ENCODE measurements at regions of chr14 and their contacts with region 1.

Region 1: GRCh38 chr14:61103481-61104339 is 122.7 kb downstream of the SLC38A6 start:
- DNase-seq: peak; percentile 76
- H3K4me3 Mint-ChIP-seq: peak overlapping the region; percentile 24
- H3K27ac Mint-ChIP-seq: peak overlapping the region; percentile 90
- H3K4me1 Mint-ChIP-seq: peaks cover 24% of the 10 kb centered on the region
- H3K27me3 Mint-ChIP-seq: no peaks in the 10 kb centered on the region

Region 2: DNA sequence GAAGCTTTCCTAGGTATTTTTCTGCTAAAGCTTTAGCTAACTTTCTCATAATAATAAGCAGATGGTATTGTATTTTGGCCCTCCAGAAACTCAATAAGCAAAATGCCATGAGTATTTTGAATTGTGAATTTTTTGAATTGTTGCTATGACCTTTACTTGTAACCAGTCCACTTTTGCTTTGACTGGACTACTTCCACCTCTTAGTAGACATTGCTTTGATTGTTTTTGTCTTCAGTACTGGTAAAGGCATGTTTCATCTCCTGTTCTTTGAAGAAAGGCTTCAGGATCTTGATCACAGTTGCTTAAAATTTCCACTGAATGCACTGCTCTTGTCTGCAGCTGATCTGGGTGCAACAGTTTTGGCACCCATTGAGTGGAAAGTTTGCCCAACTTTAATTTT is 225.2 kb before region 1 on chr14:
- intact Hi-C with region 1: loop called (anchors 10 kb)
- DNase-seq: no peak
- H3K4me3 Mint-ChIP-seq: no peak overlapping the region
- H3K27ac Mint-ChIP-seq: no peak overlapping the region
- H3K4me1 Mint-ChIP-seq: peaks cover 7% of the 10 kb centered on the region
- H3K27me3 Mint-ChIP-seq: no peaks in the 10 kb centered on the region

Region 3: DNA sequence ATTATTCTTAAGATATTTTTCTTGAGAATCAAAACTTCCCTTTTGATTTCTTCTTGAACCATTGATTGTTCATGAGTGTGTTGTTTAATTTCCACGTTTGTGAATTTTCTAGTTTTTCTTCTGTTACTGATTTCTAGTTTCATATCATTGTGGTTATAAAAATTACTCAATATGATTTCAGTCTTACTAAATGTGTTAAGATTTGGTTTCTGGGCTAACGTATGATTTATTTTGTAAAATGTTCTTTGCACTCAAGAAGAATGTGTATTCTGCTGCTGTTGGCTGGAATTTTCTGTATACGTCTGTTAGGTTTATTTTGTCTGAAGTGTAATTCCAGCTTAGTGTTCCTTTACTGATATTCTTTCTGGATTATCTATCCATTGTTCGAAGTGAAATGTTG is 147.5 kb before region 1 on chr14:
- intact Hi-C with region 1: loop called (anchors 5 kb)
- DNase-seq: no peak
- H3K4me3 Mint-ChIP-seq: no peak overlapping the region
- H3K27ac Mint-ChIP-seq: peak overlapping the region; percentile 6
- H3K4me1 Mint-ChIP-seq: peaks cover 6% of the 10 kb centered on the region
- H3K27me3 Mint-ChIP-seq: no peaks in the 10 kb centered on the region

Region 4: GRCh38 chr14:61160798-61161197 is 57.1 kb after region 1 on chr14:
- intact Hi-C with region 1: no loop called
- DNase-seq: no peak
- H3K4me3 Mint-ChIP-seq: no peak overlapping the region
- H3K27ac Mint-ChIP-seq: no peak overlapping the region
- H3K4me1 Mint-ChIP-seq: no peaks in the 10 kb centered on the region
- H3K27me3 Mint-ChIP-seq: peaks cover 4% of the 10 kb centered on the region

Region 5: GRCh38 chr14:61178226-61179060 is 74.7 kb after region 1 on chr14:
- intact Hi-C with region 1: loop called (anchors 1 kb)
- DNase-seq: peak; percentile 80
- H3K4me3 Mint-ChIP-seq: peak overlapping the region; percentile 72
- H3K27ac Mint-ChIP-seq: peak overlapping the region; percentile 87
- H3K4me1 Mint-ChIP-seq: peaks cover 42% of the 10 kb centered on the region
- H3K27me3 Mint-ChIP-seq: no peaks in the 10 kb centered on the region

Region 6: DNA sequence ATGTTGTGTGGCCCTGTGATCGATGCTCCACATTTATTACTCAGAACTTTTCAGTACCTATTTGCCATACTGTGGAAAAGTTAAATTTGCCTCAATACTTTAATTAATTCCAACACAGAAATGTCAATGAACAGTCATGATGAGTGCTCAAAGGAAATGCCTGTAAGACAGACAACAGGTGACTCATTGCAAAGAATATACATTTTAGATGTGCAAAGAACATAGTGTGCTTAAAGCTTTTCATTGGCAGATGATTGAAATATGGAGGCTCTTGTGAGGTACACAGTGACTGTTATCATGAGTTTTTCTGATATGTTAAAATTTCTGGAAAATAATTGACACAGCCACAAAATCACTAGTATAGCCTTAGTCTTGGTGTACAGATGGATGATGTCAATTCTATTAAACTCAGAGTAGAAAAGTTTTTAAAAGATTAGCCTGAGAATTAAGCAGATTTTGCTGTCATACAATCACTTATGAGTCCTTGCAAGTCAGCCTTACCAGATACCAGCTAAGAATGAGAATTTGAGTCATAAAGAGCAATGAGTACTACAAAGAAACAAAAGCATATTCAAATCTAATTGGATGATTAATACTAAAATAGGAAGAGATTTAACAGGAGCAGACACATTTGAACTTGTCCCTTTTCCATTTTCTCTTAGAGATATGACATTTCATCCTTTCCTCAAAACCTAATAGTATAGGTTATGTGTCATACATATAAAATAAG is 1397.5 kb after region 1 on chr14:
- intact Hi-C with region 1: no loop called
- DNase-seq: no peak
- H3K4me3 Mint-ChIP-seq: no peak overlapping the region
- H3K27ac Mint-ChIP-seq: no peak overlapping the region
- H3K4me1 Mint-ChIP-seq: no peaks in the 10 kb centered on the region
- H3K27me3 Mint-ChIP-seq: no peaks in the 10 kb centered on the region